A549 (cell line): ENCODE measurements at regions of chr9 and their contacts with region 1.

Region 1: DNA sequence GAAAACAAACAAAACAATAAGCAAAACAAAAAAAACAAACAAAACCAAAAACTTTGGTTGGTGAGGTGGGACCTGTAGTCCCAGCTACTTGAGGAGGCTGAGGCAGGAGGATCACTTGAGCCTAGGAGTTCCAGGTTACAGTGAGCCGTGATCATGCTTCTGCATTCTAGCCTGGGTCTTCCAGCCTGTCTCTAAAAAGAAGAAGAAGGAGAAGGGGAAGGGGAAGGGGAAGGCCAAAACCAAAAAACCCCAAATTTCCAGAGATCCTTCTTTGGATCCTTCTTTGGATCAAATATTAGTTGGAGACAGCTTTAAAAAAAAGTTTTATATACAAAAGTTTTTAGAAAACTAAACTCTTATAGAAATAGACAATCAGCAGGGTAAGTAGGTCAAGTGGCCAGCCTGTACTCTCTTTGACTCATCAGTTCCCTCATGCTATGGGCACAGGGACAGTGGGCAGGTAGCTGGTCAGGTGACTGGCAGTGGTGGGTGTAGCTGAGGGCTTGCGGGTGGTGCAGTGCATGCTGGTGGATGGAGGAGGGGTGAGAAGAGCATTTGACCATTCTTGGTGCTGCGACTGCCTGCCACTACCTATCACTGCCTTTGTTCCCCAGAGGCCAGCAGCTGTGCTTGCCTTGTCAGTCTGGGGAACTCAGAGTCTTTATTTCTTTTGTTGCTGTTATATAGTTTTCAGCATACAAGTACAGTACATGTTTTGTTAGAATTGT is 12.6 kb downstream of the RCL1 start:
- DNase-seq: no peak
- ATAC-seq: no peak
- H3K4me3 ChIP-seq: no peak overlapping the region
- H3K27ac ChIP-seq: no peak overlapping the region
- H3K4me1 ChIP-seq: no peaks in the 10 kb centered on the region
- CTCF ChIP-seq: no peak
- EP300 ChIP-seq: no peak
- POLR2A ChIP-seq: no peak
- RAD21 ChIP-seq: no peak

Region 2: GRCh38 chr9:4828761-4829160 is 23.4 kb after region 1 on chr9:
- CTCF ChIA-PET with region 1: interaction called, 11 read pairs
- POLR2A ChIA-PET with region 1: no interaction called
- DNase-seq: no peak
- ATAC-seq: no peak
- H3K4me3 ChIP-seq: no peak overlapping the region
- H3K27ac ChIP-seq: peak overlapping the region in 1 of 2 experiments; percentile 27; a peak in 2 of 6 replicates
- H3K4me1 ChIP-seq: peaks cover 54% of the 10 kb centered on the region
- CTCF ChIP-seq: no peak
- EP300 ChIP-seq: no peak
- POLR2A ChIP-seq: no peak
- RAD21 ChIP-seq: no peak

Region 3: GRCh38 chr9:4879112-4879558 is 73.8 kb after region 1 on chr9:
- CTCF ChIA-PET with region 1: no interaction called
- POLR2A ChIA-PET with region 1: no interaction called
- DNase-seq: no peak
- ATAC-seq: no peak
- H3K4me3 ChIP-seq: no peak overlapping the region
- H3K27ac ChIP-seq: no peak overlapping the region
- H3K4me1 ChIP-seq: no peaks in the 10 kb centered on the region
- CTCF ChIP-seq: no peak
- EP300 ChIP-seq: no peak
- POLR2A ChIP-seq: no peak
- RAD21 ChIP-seq: no peak